Heart right ventricle (tissue), 16 donors: ENCODE measurements at regions of chr12 and their contacts with region 1.

Region 1: GRCh38 chr12:19779393-19780056 is 340.2 kb downstream of the AEBP2 start:
- DNase-seq: peak; percentile 22 to 46
- ATAC-seq: peak; percentile 73 to 94 (median 88)
- H3K4me3 ChIP-seq: no peak overlapping the region
- H3K27ac ChIP-seq: peak overlapping the region in 8 of 10 donors; percentile 7 to 60 (median 37)
- H3K4me1 ChIP-seq: peaks cover 0 to 20% (median 11%) of the 10 kb centered on the region in 9 donors
- H3K27me3 ChIP-seq: no peaks in the 10 kb centered on the region
- CTCF ChIP-seq: peak in 5 of 9 donors; percentile 18 to 53 (median 48)

Region 2: GRCh38 chr12:19675361-19675760 is 104.2 kb before region 1 on chr12:
- intact Hi-C with region 1: no loop called
- DNase-seq: no peak
- ATAC-seq: no peak
- H3K4me3 ChIP-seq: no peak overlapping the region
- H3K27ac ChIP-seq: no peak overlapping the region
- H3K4me1 ChIP-seq: no peaks in the 10 kb centered on the region
- H3K27me3 ChIP-seq: no peaks in the 10 kb centered on the region
- CTCF ChIP-seq: no peak

Region 3: GRCh38 chr12:19872621-19873540 is 93.4 kb after region 1 on chr12:
- intact Hi-C with region 1: no loop called
- DNase-seq: no peak
- ATAC-seq: no peak
- H3K4me3 ChIP-seq: no peak overlapping the region
- H3K27ac ChIP-seq: no peak overlapping the region
- H3K4me1 ChIP-seq: no peaks in the 10 kb centered on the region
- H3K27me3 ChIP-seq: no peaks in the 10 kb centered on the region
- CTCF ChIP-seq: no peak

Region 4: DNA sequence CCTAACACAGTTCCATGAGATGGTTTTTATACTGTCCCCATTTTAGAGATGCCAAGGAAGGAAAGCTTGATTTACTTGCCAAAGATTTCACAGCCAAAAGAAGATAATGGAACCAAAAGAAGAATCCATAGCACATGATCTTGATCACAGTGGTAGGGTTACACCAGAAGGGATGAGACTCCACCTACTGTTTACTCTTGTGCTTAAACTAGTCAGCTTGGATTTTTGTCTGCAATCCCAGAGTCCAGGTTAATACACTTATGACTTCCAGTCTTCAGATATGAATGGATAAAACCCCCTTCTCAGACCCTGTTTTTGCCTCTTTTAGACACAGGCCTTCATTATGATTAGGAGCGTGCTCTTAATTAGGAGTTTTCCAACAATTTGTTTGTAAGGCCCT is 114.0 kb after region 1 on chr12:
- intact Hi-C with region 1: loop called in 5 of 10 experiments (anchors 5 to 10 kb)
- DNase-seq: no peak
- ATAC-seq: peak in 5 of 8 donors; percentile 61 to 83 (median 63)
- H3K4me3 ChIP-seq: no peak overlapping the region
- H3K27ac ChIP-seq: no peak overlapping the region
- H3K4me1 ChIP-seq: peaks cover 0 to 27% (median 13%) of the 10 kb centered on the region in 9 donors
- H3K27me3 ChIP-seq: no peaks in the 10 kb centered on the region
- CTCF ChIP-seq: peak in 7 of 9 donors; percentile 9 to 54 (median 32)